Activated CD4-positive, alpha-beta memory T cell treated with anti-CD3 and anti-CD28 coated beads, Interleukin-2, amount 10 ng/mL, durations not matched to agents 7 days and 5 days (primary cell): ENCODE measurements at regions of chr5 and their contacts with region 1.

Region 1: GRCh38 chr5:131263648-131264450 is at the start of gene CDC42SE2:
- DNase-seq: peak; percentile 89
- H3K4me3 Mint-ChIP-seq: peak within 1 kb of the TSS; percentile 93
- H3K27ac Mint-ChIP-seq: peak within 1 kb of the TSS; percentile 90
- H3K4me1 Mint-ChIP-seq: peaks cover 51% of the 10 kb centered on the region
- H3K27me3 Mint-ChIP-seq: no peaks in the 10 kb centered on the region
- total RNA-seq, gene CDC42SE2: 163 to 166 TPM

Region 2: GRCh38 chr5:131170540-131171275 is 93.1 kb before region 1 on chr5 and contains the start of gene LYRM7:
- CTCF ChIA-PET with region 1: interaction called, 12 read pairs
- POLR2A ChIA-PET with region 1: interaction called, 128 read pairs
- DNase-seq: peak; percentile 98
- H3K4me3 Mint-ChIP-seq: peak within 1 kb of the TSS; percentile 95
- H3K27ac Mint-ChIP-seq: peak within 1 kb of the TSS; percentile 85
- H3K4me1 Mint-ChIP-seq: peaks cover 53% of the 10 kb centered on the region
- H3K27me3 Mint-ChIP-seq: no peaks in the 10 kb centered on the region
- total RNA-seq, gene LYRM7: 9.8 to 11.9 TPM

Region 3: GRCh38 chr5:131224387-131225201 is 39.3 kb before region 1 on chr5:
- CTCF ChIA-PET with region 1: interaction called, 3 read pairs
- POLR2A ChIA-PET with region 1: interaction called, 17 read pairs
- DNase-seq: peak; percentile 43
- H3K4me3 Mint-ChIP-seq: no peak overlapping the region
- H3K27ac Mint-ChIP-seq: no peak overlapping the region
- H3K4me1 Mint-ChIP-seq: peaks cover 13% of the 10 kb centered on the region
- H3K27me3 Mint-ChIP-seq: no peaks in the 10 kb centered on the region

Region 4: DNA sequence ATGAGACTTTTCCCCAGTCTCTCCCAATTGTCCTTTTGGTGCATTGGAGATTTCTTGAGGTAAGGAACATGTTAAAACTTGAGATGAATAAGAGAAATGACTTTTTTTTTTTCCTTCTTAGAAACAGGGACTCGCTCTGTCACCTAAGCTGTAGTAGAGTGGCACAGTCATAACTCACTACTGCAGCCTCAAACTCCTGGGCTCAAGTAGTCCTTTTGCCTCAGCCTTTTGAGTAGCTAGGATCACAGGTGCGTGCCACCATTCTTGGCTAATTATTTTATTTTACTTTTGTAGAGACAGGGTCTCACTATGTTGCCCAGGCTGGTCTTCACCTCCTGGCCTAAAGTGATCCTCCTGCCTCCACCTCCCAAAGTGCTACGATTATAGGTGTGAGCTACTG is 25.9 kb after region 1 on chr5:
- CTCF ChIA-PET with region 1: interaction called, 4 read pairs
- POLR2A ChIA-PET with region 1: interaction called, 44 read pairs
- DNase-seq: peak; percentile 40
- H3K4me3 Mint-ChIP-seq: peak overlapping the region; percentile 73
- H3K27ac Mint-ChIP-seq: peak overlapping the region; percentile 93
- H3K4me1 Mint-ChIP-seq: peaks cover 63% of the 10 kb centered on the region
- H3K27me3 Mint-ChIP-seq: no peaks in the 10 kb centered on the region

Region 5: GRCh38 chr5:131364507-131365050 is 100.7 kb after region 1 on chr5:
- CTCF ChIA-PET with region 1: no interaction called
- POLR2A ChIA-PET with region 1: interaction called, 10 read pairs
- DNase-seq: peak; percentile 41
- H3K4me3 Mint-ChIP-seq: peak overlapping the region; percentile 1
- H3K27ac Mint-ChIP-seq: peak overlapping the region; percentile 74
- H3K4me1 Mint-ChIP-seq: peaks cover 70% of the 10 kb centered on the region
- H3K27me3 Mint-ChIP-seq: no peaks in the 10 kb centered on the region

Region 6: GRCh38 chr5:131394128-131394527 is 130.3 kb after region 1 on chr5:
- CTCF ChIA-PET with region 1: interaction called, 5 read pairs
- POLR2A ChIA-PET with region 1: interaction called, 68 read pairs
- DNase-seq: peak; percentile 50
- H3K4me3 Mint-ChIP-seq: peak overlapping the region; percentile 45
- H3K27ac Mint-ChIP-seq: peak overlapping the region; percentile 83
- H3K4me1 Mint-ChIP-seq: peaks cover 75% of the 10 kb centered on the region
- H3K27me3 Mint-ChIP-seq: no peaks in the 10 kb centered on the region